Ascending aorta (tissue), 2 donors: ENCODE measurements at regions of chr15 and their contacts with region 1.

Region 1: DNA sequence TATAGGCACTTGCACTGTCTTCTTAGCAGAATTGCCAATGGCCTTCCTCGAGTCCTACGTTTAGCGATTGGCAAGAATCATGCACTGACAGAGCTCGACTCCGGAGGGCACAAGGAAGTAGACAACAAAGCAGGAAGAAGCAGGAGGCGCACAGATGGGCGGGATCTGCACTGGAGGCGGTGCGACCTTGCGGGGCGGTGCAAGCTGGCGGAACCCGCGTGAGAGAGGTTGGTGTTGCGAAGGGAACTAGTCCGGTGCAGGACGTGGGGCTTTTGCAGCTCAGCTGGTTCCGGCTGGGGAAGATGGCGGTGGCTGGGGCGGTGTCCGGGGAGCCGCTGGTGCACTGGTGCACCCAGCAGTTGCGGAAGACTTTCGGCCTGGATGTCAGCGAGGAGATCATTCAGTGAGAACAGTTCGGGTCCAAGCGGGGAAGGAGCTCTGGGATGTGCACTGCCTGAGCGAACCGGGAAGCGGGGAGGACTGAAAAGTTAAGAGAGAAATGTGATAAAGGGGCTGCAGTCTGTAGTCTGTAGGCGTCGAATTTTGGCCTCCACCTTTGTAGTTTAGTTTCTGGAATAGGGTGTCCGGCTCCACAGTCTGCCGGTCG is at the start of gene TRIP4:
- DNase-seq: peak; percentile 73 to 97
- H3K4me3 ChIP-seq: peak within 1 kb of the TSS; percentile 66 to 73
- H3K27ac ChIP-seq: peak within 1 kb of the TSS; percentile 64 to 71
- H3K4me1 ChIP-seq: peaks cover 0 to 4% of the 10 kb centered on the region in 2 donors
- H3K27me3 ChIP-seq: no peaks in the 10 kb centered on the region
- CTCF ChIP-seq: peak in 1 of 3 experiments; percentile 2
- total RNA-seq, gene TRIP4: 5.6 TPM

Region 2: DNA sequence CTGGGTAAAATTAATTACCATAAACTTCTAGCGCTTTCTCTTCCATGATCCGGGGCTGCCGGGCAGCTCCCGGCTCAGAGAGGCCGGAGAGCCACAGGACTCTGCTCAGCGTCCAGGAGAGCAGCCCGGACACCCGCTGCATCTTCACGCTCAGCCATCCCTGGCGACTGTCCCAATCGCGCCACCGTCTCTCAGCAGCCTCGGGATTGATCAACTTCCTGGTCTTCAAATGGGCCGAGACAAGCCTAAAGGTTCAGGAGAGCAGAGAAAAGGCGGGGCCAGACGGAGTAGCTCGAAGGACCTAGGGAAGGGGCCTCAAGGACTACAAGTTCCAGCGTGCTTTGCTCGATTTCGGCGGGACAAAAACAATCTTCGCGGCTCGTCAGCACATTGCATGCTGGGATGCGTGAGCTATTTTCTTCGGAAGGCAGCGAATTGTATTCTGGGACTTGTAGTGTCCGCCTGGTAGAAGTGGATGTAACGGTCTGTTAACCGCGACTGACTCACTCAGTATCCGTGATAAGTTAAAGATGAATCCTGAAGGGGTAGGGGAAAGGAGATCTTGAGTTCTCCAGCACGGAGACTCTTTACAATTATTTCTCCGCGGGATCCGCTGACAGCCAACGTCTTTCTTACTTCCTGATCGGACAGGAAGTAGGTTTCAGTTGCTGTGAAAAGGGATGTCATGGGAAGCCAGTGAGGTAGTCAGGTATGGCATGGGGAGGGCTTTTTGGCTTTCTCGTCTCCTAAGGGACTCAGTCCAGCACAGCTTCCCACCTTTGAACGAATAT is 293.8 kb before region 1 on chr15 and contains the start of gene CIAO2A:
- intact Hi-C with region 1: loop called (anchors 10 kb)
- DNase-seq: peak; percentile 91 to 98
- H3K4me3 ChIP-seq: peak within 1 kb of the TSS; percentile 59 to 79
- H3K27ac ChIP-seq: peak within 1 kb of the TSS; percentile 79 to 89
- H3K4me1 ChIP-seq: peaks cover 13 to 32% of the 10 kb centered on the region in 2 donors
- H3K27me3 ChIP-seq: no peaks in the 10 kb centered on the region
- CTCF ChIP-seq: no peak
- total RNA-seq, gene CIAO2A: 2.4 TPM

Region 3: DNA sequence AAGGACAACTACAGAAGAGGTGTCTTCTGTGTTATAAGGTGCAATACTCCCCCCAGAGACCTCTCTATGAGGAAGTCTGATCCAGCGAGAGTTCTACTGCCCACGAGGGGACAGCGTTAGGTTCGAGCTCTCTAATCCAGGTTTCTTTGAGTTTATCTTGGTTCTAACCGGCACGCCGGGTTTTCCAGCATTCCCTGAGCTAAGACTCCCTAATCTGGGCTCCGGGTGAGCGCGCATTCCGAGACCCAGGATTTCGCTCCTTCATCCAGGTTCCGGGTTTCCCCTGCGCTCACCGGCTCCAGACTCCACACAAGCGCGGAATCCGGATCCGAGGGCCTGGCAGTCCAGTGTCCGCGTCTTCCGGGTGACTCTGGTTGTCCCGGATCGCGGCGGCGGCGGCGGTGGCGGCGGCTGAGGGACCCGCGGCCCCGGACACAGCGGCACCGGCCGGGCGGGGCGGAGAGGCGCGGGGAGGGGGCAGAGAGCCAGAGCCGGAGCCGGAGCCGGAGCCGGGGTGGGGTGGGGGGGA is 72.6 kb after region 1 on chr15 and contains the start of gene ZNF609:
- intact Hi-C with region 1: loop called (anchors 1 kb)
- DNase-seq: peak; percentile 72 to 98
- H3K4me3 ChIP-seq: peak within 1 kb of the TSS; percentile 97 to 98
- H3K27ac ChIP-seq: peak within 1 kb of the TSS; percentile 83 to 93
- H3K4me1 ChIP-seq: peaks cover 4 to 30% of the 10 kb centered on the region in 2 donors
- H3K27me3 ChIP-seq: no peaks in the 10 kb centered on the region
- CTCF ChIP-seq: no peak
- total RNA-seq, gene ZNF609: 16.0 TPM